ENCODE measurements at regions of chr5 and their contacts with region 1.

Region 1: DNA sequence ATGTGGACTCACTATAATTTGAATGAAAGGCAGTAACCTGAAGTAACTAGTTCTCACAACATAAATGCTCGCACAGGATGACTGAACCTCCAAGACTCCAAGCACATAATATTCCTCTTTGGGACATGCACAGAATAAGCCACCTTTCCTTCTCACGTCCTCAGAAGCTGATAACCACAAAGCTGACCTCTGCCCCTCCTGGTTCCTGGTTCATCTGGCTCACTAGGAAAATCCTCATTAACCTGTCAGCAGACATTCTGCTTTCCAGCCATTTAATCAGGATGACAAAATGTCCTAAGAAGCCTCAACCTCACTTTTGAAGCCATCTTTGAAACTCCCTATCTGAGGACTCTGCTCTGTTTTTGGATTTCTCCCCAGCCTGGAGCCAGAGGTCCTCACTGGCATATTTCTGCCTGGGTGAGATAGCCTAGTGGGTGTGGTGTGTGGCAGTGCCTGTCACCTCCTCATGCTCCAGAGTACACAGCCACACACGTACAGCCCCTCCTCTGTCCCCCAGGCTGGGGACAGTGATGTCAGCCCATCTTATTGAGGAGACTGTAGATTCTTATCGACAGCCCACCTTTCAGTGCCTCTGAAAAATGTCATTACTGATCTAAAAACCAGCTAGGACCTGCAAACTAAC is 10.3 kb downstream of the ANKH start:
- DNase-seq: no peak
- H3K4me3 ChIP-seq: no peak overlapping the region
- CTCF ChIP-seq: no peak

Region 2: DNA sequence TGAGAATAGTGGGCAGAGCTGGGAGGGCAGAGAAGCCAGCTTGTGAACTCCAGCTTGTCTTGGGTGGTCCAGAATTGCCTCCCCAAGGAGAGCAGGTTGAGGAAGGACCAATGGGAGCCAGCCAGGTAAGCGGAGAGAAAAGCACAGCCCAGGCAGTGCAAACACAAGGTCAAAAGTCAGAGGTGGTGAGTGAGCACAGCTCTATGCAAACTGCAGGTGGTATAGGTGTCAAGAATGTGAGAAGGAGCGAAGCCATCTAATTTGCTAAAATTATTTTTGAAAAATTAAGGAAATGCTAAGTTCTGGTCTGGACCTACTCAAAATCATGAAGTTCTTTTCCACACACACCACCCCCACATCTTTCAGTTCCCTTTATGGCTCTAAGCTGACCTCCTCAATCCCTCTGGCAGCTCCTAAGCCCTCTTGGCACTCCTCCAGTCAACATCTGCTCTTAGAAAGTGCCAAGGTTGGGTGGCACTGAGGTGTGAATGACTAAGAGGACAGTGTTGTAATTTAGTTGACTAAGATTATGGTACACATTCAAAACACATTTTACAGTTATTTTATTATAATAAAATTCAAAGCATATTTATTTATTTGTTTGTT is 286.2 kb before region 1 on chr5:
- CTCF ChIA-PET with region 1: no interaction called
- POLR2A ChIA-PET with region 1: no interaction called
- DNase-seq: no peak
- H3K4me3 ChIP-seq: no peak overlapping the region
- CTCF ChIP-seq: no peak

Region 3: GRCh38 chr5:14871210-14872069 is 10.2 kb after region 1 on chr5 and contains the start of gene ANKH:
- CTCF ChIA-PET with region 1: interaction called, 15 read pairs
- POLR2A ChIA-PET with region 1: no interaction called
- DNase-seq: no peak
- H3K4me3 ChIP-seq: peak within 1 kb of the TSS; percentile 74
- CTCF ChIP-seq: peak; percentile 47

Measured in AG04449 (cell line).